ENCODE measurements at regions of chr7 and their contacts with region 1.

Region 1: DNA sequence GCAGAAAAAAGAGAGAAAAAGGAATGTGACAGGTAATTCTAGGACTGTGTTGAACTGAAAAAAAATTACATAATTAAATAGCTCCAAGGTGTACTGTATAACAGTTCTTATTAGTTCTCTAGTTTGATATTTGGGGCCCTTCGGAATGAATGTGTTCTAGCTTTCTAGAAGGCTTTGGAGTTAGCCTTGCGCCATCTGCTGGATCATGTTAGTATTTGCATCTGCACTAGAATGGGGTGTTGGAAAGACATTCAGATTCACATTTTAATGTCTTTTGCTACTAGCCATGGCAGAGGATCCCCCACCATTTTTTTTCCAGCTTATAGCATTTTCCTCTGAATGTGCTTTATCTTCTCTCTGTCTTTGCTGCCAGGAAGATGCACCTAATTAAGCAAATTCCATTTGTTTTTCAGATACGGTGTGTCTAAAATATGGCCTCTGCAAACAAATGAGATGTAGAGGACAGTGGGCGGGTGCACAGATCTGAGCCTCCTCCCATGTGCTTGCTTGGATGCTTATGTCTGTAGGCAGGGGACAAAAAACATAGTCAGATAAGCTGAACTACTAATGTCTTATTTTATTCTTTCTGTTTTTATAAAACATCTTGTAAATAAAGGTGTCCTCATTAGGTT is 238.5 kb downstream of the PHF14 start:
- DNase-seq: peak; percentile 38
- H3K4me3 Mint-ChIP-seq: no peak overlapping the region
- H3K27ac Mint-ChIP-seq: no peak overlapping the region
- H3K4me1 Mint-ChIP-seq: peaks cover 1% of the 10 kb centered on the region
- H3K27me3 Mint-ChIP-seq: no peaks in the 10 kb centered on the region

Region 2: DNA sequence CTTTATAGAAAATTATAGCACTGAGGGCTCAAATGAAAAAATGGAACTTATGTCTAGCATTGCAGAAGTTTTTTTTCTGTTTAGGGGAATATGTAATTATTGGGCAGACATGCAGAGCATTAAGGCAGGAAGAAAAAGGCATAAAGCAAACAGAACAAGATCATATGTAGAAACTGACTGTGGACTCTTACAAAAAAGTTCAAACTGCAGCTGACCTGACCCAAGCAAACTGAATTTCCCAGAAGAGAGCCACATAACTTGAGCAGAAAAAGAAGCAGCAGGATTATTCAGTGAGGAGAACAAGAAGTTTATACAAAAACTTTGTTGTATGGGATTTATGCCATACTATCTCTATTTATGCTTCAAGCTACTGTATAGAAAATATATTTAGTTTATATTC is 12.3 kb after region 1 on chr7:
- CTCF ChIA-PET with region 1: interaction called, 23 read pairs
- POLR2A ChIA-PET with region 1: no interaction called
- DNase-seq: no peak
- H3K4me3 Mint-ChIP-seq: no peak overlapping the region
- H3K27ac Mint-ChIP-seq: no peak overlapping the region
- H3K4me1 Mint-ChIP-seq: no peaks in the 10 kb centered on the region
- H3K27me3 Mint-ChIP-seq: no peaks in the 10 kb centered on the region

Region 3: DNA sequence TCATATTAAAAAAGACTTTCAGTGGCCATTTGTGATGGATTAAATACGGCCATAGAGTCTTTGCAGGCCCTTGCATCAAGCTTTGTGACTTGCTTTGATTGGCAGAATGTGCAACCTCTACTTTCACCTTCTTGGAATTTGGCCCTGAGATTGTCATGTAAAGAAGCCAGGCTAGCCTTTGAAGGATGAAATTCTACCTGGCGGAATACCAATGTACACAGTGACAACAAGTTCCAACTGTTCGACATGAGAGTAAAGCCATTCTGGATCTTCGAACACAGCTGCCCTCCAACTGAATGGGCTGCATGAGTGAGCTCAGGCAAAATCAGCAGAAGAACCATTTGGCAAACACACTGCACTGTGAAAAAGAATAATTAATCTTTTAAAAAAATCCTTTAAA is 82.8 kb after region 1 on chr7:
- CTCF ChIA-PET with region 1: no interaction called
- POLR2A ChIA-PET with region 1: no interaction called
- DNase-seq: no peak
- H3K4me3 Mint-ChIP-seq: no peak overlapping the region
- H3K27ac Mint-ChIP-seq: no peak overlapping the region
- H3K4me1 Mint-ChIP-seq: no peaks in the 10 kb centered on the region
- H3K27me3 Mint-ChIP-seq: no peaks in the 10 kb centered on the region

Region 4: GRCh38 chr7:11343818-11344413 is 131.7 kb after region 1 on chr7:
- CTCF ChIA-PET with region 1: no interaction called
- POLR2A ChIA-PET with region 1: no interaction called
- DNase-seq: no peak
- H3K4me3 Mint-ChIP-seq: no peak overlapping the region
- H3K27ac Mint-ChIP-seq: no peak overlapping the region
- H3K4me1 Mint-ChIP-seq: no peaks in the 10 kb centered on the region
- H3K27me3 Mint-ChIP-seq: peaks cover 12% of the 10 kb centered on the region

Measured in activated CD4-positive, alpha-beta memory T cell treated with anti-CD3 and anti-CD28 coated beads, Interleukin-2, amount 10 ng/mL, durations not matched to agents 7 days and 5 days (primary cell).